BJ (cell line): ENCODE measurements at regions of chr3 and their contacts with region 1.

Region 1: DNA sequence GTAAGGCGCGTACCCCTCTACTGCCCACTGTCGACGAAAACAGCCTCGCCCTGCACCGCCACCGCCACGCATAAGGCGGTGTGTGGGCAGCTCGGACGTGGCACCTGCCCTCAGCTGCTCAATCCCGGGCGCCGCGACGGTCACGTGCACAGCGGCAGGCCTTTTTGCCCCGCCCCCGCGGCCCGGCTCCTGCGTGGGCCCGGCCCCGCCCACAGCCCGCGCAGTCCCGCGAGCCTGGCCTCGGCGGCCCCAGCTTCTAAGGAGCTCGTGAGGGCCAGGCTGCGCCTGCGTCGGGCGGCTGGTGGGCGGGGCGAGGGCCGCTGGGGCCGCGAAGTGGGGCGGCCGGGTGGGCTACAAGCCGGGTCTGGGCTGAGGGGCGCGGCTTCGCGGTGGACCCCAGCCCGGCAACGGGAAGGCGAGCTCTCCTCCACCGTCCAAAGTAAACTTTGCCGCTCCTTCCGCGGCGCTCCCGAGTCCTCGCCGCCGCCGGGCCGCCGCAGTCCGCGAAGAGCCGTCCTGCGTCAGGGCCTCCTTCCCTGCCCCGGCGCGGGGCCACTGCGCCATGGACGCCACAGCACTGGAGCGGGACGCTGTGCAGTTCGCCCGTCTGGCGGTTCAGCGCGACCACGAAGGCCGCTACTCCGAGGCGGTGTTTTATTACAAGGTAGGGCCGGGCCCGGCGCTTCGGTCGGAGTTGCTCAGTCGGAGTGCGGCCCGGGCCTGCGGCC is at the start of gene CAPN7:
- DNase-seq: peak; percentile 75
- H3K4me3 ChIP-seq: peak within 1 kb of the TSS; percentile 60
- H3K27me3 ChIP-seq: no peaks in the 10 kb centered on the region
- CTCF ChIP-seq: peak; percentile 67
- polyA plus RNA-seq, gene CAPN7: 12.9 and 22.1 TPM in 2 replicates

Region 2: DNA sequence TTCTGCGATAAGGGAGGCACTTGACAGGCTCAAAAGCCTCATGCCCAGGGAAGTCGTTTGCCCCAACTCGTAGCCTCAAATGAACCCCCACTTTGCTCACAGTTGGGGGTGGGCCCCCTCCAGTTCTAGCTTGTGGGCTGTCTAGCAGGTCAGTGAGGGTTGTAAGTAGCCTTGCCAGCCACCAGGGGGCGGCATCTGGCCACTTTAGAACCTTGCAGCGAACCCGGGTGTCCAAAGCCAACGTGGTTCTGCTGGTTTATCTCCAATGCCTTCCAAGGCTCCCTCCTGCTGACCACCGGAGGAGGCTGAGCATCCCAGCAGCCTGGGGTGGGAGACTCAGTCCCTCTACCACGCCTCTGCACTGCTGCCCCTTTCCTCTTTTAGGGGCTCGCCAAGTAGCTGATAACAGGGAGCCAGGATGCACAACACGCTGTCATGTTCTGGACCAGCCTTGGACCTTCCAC is 98.0 kb before region 1 on chr3:
- CTCF ChIA-PET with region 1: interaction called, 43 read pairs
- POLR2A ChIA-PET with region 1: no interaction called
- DNase-seq: no peak
- H3K4me3 ChIP-seq: no peak overlapping the region
- H3K27me3 ChIP-seq: no peaks in the 10 kb centered on the region
- CTCF ChIP-seq: peak; percentile 97

Region 3: GRCh38 chr3:15148614-15149013 is 57.5 kb before region 1 on chr3:
- CTCF ChIA-PET with region 1: no interaction called
- POLR2A ChIA-PET with region 1: no interaction called
- DNase-seq: no peak
- H3K4me3 ChIP-seq: no peak overlapping the region
- H3K27me3 ChIP-seq: no peaks in the 10 kb centered on the region
- CTCF ChIP-seq: no peak

Region 4: DNA sequence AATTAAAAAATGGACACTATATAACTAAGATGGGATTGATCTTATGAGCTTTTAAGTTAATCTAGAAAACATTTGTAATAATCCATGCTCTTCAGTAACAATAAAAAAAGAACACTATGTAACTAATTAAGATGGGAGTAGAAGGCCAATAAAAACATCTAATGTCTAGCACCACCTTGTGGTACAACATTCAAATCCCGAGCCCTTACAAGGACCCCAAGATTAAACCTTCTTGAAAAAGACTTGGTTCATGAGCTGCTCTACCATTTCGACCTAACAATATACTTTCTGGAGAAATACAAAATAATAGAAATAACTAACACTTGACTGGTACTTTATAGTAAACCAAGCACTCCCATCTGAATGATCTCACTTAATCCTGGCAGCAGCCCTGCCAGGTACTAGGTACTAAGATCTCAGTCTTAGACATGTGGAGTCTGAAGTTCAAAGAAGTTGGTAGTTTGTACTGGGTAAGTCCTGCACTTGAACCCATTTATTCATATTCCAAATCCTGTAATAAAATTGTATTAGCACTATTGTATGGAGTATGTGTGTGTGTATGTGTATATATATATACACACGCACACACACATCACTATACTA is 199.5 kb after region 1 on chr3:
- CTCF ChIA-PET with region 1: interaction called, 19 read pairs
- POLR2A ChIA-PET with region 1: no interaction called
- DNase-seq: no peak
- H3K4me3 ChIP-seq: no peak overlapping the region
- H3K27me3 ChIP-seq: no peaks in the 10 kb centered on the region
- CTCF ChIP-seq: peak; percentile 58

Region 5: GRCh38 chr3:15476378-15476777 is 270.3 kb after region 1 on chr3:
- CTCF ChIA-PET with region 1: no interaction called
- POLR2A ChIA-PET with region 1: no interaction called
- DNase-seq: no peak
- H3K4me3 ChIP-seq: no peak overlapping the region
- H3K27me3 ChIP-seq: no peaks in the 10 kb centered on the region
- CTCF ChIP-seq: no peak

Region 6: DNA sequence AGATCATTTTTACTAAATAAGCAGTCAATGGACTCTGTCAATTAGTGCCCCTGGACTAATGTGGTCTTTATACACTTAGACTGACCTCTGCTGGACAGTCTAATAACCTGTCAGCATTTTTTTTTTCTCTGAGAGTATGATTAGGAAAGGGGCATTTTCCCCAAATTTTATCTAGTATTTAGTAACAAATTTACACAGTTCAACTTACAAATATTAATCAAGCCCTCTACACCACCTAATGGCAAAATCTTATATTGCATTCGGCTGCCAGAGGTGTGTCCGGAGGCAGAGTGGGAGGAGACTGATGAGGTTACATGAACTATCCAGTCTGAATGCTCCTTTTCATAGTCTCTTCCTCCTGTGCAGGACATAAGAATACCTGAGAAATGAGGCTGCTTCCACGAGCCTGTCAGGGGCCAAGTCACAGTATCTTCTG is 351.4 kb after region 1 on chr3:
- CTCF ChIA-PET with region 1: interaction called, 13 read pairs
- POLR2A ChIA-PET with region 1: no interaction called
- DNase-seq: peak; percentile 41
- H3K4me3 ChIP-seq: no peak overlapping the region
- H3K27me3 ChIP-seq: no peaks in the 10 kb centered on the region
- CTCF ChIP-seq: peak; percentile 56